ENCODE measurements at regions of chr7 and their contacts with region 1.

Region 1: GRCh38 chr7:134701272-134701671 is 54.6 kb downstream of the BPGM start:
- DNase-seq: peak in 4 of 5 donors; percentile 18 to 21 (median 20)
- H3K4me3 ChIP-seq: no peak overlapping the region
- H3K4me3 Mint-ChIP-seq: no peak overlapping the region
- H3K27ac ChIP-seq: no peak overlapping the region
- H3K27ac Mint-ChIP-seq: no peak overlapping the region
- H3K4me1 ChIP-seq: no peaks in the 10 kb centered on the region
- H3K4me1 Mint-ChIP-seq: no peaks in the 10 kb centered on the region
- H3K27me3 ChIP-seq: no peaks in the 10 kb centered on the region
- H3K27me3 Mint-ChIP-seq: no peaks in the 10 kb centered on the region

Region 2: GRCh38 chr7:134254311-134254710 is 447.0 kb before region 1 on chr7:
- CTCF ChIA-PET with region 1: no interaction called
- POLR2A ChIA-PET with region 1: no interaction called
- intact Hi-C with region 1: no loop called
- DNase-seq: no peak
- H3K4me3 ChIP-seq: no peak overlapping the region
- H3K4me3 Mint-ChIP-seq: no peak overlapping the region
- H3K27ac ChIP-seq: no peak overlapping the region
- H3K27ac Mint-ChIP-seq: no peak overlapping the region
- H3K4me1 ChIP-seq: no peaks in the 10 kb centered on the region
- H3K4me1 Mint-ChIP-seq: no peaks in the 10 kb centered on the region
- H3K27me3 ChIP-seq: no peaks in the 10 kb centered on the region
- H3K27me3 Mint-ChIP-seq: peaks cover 2 to 5% of the 10 kb centered on the region in 2 donors

Region 3: DNA sequence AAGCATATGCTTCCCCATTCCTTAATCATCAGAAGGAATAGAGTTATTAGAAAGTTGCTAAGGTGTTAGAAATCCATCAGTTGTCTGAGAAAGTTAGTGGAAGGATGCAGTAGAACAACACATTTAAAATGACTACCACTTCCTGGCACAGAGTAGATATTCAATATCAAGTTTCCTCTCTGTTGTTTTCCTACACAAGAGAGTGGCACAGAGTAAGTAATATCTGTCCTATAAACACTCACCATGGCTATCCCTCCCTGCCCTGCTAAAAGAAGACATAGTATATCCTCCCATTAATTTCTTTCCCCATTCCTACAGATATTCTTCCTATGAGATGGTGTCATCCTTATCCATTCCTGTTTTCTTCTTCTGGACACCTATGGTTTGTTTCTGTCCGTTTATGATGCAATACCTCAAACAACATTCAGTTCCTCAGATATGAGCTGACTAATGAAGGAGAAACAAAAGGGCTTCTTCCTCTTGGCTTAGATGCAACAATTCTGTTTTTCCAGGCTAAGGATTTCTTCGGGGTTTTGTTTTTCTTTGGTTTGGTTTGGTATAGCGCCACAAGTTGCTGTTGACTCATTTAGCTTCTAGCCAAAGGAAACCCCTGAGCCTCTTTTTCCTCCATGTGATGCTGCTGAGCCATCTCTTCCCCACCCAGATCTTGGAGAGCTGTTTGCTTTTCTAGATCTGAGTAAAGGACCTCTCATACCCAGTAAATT is 87.5 kb before region 1 on chr7:
- CTCF ChIA-PET with region 1: interaction called, 10 read pairs
- POLR2A ChIA-PET with region 1: no interaction called
- intact Hi-C with region 1: no loop called
- DNase-seq: no peak
- H3K4me3 ChIP-seq: no peak overlapping the region
- H3K4me3 Mint-ChIP-seq: no peak overlapping the region
- H3K27ac ChIP-seq: no peak overlapping the region
- H3K27ac Mint-ChIP-seq: no peak overlapping the region
- H3K4me1 ChIP-seq: no peaks in the 10 kb centered on the region
- H3K4me1 Mint-ChIP-seq: peaks cover 0 to 2% (median 0%) of the 10 kb centered on the region in 4 donors
- H3K27me3 ChIP-seq: no peaks in the 10 kb centered on the region
- H3K27me3 Mint-ChIP-seq: peaks cover 20 to 21% of the 10 kb centered on the region in 2 donors

Region 4: DNA sequence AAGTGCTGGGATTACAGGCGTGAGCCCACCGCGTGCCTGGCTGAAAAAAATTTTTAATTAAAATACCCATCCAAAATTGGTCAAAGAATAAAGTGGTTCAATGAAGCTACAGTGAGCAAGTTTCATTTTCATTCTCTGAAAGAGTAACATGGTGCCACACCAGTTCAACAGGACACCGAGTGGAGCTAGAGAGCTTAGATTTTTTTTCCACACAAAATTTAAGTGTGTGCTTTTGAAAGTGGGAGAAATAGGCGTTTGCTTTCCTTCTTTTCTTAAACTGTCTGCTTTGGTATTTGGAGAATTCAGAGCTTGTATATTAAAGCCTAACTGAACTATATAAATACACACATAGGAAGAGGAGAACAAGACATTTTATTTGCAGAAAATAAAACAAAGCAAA is 11.3 kb before region 1 on chr7:
- CTCF ChIA-PET with region 1: interaction called, 11 read pairs
- POLR2A ChIA-PET with region 1: no interaction called
- intact Hi-C with region 1: no loop called
- DNase-seq: no peak
- H3K4me3 ChIP-seq: no peak overlapping the region
- H3K4me3 Mint-ChIP-seq: no peak overlapping the region
- H3K27ac ChIP-seq: no peak overlapping the region
- H3K27ac Mint-ChIP-seq: no peak overlapping the region
- H3K4me1 ChIP-seq: no peaks in the 10 kb centered on the region
- H3K4me1 Mint-ChIP-seq: no peaks in the 10 kb centered on the region
- H3K27me3 ChIP-seq: no peaks in the 10 kb centered on the region
- H3K27me3 Mint-ChIP-seq: peaks cover 2 to 3% of the 10 kb centered on the region in 2 donors

Measured in CD4-positive, alpha-beta memory T cell (primary cell).